Activated CD4-positive, alpha-beta T cell treated with anti-CD3 and anti-CD28 coated beads, Interleukin-2, amount 10 ng/mL, durations not matched to agents 24 days and 14 days (primary cell): ENCODE measurements at regions of chr10 and their contacts with region 1.

Region 1: GRCh38 chr10:6667679-6668270 is 87.7 kb upstream of the PRKCQ start:
- DNase-seq: peak; percentile 83
- H3K4me3 Mint-ChIP-seq: no peak overlapping the region
- H3K27ac Mint-ChIP-seq: peak overlapping the region; percentile 31
- H3K4me1 Mint-ChIP-seq: peaks cover 22% of the 10 kb centered on the region
- H3K27me3 Mint-ChIP-seq: peaks cover 11% of the 10 kb centered on the region

Region 2: GRCh38 chr10:6416892-6417512 is 250.8 kb before region 1 on chr10:
- intact Hi-C with region 1: loop called (anchors 1 kb)
- DNase-seq: peak; percentile 79
- H3K4me3 Mint-ChIP-seq: no peak overlapping the region
- H3K27ac Mint-ChIP-seq: no peak overlapping the region
- H3K4me1 Mint-ChIP-seq: peaks cover 7% of the 10 kb centered on the region
- H3K27me3 Mint-ChIP-seq: no peaks in the 10 kb centered on the region

Region 3: DNA sequence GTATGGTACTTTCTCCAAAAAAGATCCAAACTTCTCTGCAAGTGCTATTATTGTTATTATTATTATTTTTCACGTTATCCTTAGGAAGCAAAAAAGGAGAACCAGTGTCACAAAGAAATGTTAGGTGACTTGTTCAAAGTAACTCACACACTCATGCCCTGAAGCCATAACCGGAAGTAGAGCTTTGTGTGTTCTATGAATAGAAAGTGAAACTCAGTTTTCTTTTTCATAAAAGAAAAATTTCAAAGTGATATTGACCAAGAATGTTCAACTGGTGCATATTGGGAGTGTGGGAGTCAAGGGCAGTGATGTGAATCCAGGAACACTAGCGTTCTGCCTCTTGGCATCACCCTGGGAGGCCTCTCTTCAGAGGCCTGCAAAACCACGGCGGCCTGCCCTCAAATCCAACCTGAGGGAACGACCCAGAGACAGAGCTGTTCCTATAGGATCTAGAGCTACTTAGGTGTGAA is 193.8 kb before region 1 on chr10:
- intact Hi-C with region 1: loop called (anchors 1 kb)
- DNase-seq: peak; percentile 82
- H3K4me3 Mint-ChIP-seq: peak overlapping the region; percentile 85
- H3K27ac Mint-ChIP-seq: peak overlapping the region; percentile 96
- H3K4me1 Mint-ChIP-seq: peaks cover 54% of the 10 kb centered on the region
- H3K27me3 Mint-ChIP-seq: no peaks in the 10 kb centered on the region

Region 4: GRCh38 chr10:6607778-6608177 is 60.0 kb before region 1 on chr10:
- intact Hi-C with region 1: loop called (anchors 1 kb)
- DNase-seq: no peak
- H3K4me3 Mint-ChIP-seq: no peak overlapping the region
- H3K27ac Mint-ChIP-seq: peak overlapping the region; percentile 91
- H3K4me1 Mint-ChIP-seq: peaks cover 61% of the 10 kb centered on the region
- H3K27me3 Mint-ChIP-seq: no peaks in the 10 kb centered on the region

Region 5: DNA sequence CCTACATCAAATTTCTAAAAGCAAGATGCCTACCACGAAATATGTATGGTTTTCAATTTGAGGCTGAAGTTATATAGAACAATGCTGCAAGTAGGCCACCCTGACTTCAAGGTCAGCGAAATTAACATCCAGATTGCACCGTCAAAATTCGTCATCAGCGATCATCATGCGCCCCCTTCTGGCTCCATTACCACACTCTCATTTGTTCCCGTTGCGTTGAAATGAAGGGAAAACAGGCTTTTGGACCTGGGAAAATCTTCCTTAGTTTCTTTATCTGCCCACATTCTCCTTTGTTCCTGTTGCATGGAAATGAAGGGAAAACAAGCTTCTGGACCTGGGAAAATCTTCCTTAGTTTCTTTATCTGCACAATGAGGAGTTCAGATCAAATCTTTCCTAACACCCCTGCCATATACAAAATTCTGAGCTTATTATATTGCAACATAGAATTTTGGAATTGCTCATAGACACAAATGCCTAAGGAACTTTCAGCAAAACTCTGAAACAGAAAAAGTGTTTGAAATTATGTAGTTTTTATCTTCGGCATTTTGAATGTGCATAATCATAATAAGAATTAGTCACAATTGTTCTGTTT is 10.5 kb after region 1 on chr10:
- intact Hi-C with region 1: loop called (anchors 1 kb)
- DNase-seq: peak; percentile 89
- H3K4me3 Mint-ChIP-seq: no peak overlapping the region
- H3K27ac Mint-ChIP-seq: no peak overlapping the region
- H3K4me1 Mint-ChIP-seq: peaks cover 9% of the 10 kb centered on the region
- H3K27me3 Mint-ChIP-seq: peaks cover 57% of the 10 kb centered on the region

Region 6: GRCh38 chr10:6688661-6689435 is 21.1 kb after region 1 on chr10:
- intact Hi-C with region 1: no loop called
- DNase-seq: no peak
- H3K4me3 Mint-ChIP-seq: no peak overlapping the region
- H3K27ac Mint-ChIP-seq: no peak overlapping the region
- H3K4me1 Mint-ChIP-seq: no peaks in the 10 kb centered on the region
- H3K27me3 Mint-ChIP-seq: peaks cover 33% of the 10 kb centered on the region